Activated T-helper 2 cell treated with anti-CD3 and anti-CD28 coated beads, Interferon-gamma antibody, Interleukin-2, Interleukin-4, amounts not matched to agents 10 μg/mL and 5 μg/mL and 100 μg/mL, durations not matched to agents 14 hours and 24 hours and 36 hours (primary cell): ENCODE measurements at regions of chr4 and their contacts with region 1.

Region 1: DNA sequence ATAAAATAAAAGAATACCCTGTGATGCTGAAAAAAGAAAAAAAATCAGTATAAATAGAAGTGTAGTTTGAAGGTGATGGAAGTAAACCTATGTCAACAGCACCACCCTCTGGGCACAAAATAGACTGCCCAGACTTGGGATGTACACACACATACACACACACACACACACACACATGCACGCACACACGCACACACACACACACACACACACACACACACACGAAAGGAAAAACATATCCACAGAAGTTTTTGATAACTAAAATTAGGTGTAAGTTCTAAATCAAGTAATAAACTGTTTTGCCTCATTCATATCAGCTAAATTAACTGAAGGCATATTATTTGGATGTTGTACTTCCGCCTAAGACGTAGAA is 40.5 kb downstream of the ANXA5 start:
- DNase-seq: no peak
- H3K4me3 Mint-ChIP-seq: no peak overlapping the region
- H3K27ac Mint-ChIP-seq: no peak overlapping the region
- H3K4me1 Mint-ChIP-seq: peaks cover 7% of the 10 kb centered on the region
- H3K27me3 Mint-ChIP-seq: peaks cover 28% of the 10 kb centered on the region

Region 2: DNA sequence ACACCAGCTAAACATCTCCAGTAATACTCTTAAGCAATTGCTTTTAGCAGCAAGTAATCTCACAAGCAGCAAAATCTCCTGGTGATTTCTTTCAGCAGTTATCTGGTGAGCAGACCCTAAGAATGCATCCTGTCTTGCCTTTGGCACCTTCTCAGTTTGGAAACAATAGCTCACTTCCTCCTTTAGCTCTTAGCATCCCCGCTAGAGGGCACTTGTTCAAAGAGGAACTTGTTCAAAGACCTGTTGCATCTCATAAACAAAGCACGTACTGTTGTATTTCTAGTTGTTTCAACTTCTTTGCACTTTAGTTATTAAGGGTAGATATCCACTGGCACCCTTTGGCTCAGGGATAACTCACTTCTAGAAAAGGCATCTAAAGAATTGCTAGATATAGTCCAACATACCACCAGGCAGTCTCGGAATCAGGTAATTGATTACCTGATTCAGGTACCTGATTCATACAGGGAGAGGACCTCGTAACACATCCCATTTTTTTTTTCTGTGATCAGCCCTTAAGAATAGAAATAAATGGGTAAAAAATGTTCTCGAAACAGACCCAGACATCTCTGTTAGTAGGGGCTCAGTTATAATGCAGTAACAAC is 193.5 kb before region 1 on chr4:
- intact Hi-C with region 1: loop called (anchors 5 kb)
- DNase-seq: no peak
- H3K4me3 Mint-ChIP-seq: no peak overlapping the region
- H3K27ac Mint-ChIP-seq: no peak overlapping the region
- H3K4me1 Mint-ChIP-seq: peaks cover 4% of the 10 kb centered on the region
- H3K27me3 Mint-ChIP-seq: peaks cover 24% of the 10 kb centered on the region

Region 3: GRCh38 chr4:121484633-121485032 is 171.6 kb before region 1 on chr4:
- intact Hi-C with region 1: loop called (anchors 1 kb)
- DNase-seq: no peak
- H3K4me3 Mint-ChIP-seq: no peak overlapping the region
- H3K27ac Mint-ChIP-seq: no peak overlapping the region
- H3K4me1 Mint-ChIP-seq: no peaks in the 10 kb centered on the region
- H3K27me3 Mint-ChIP-seq: peaks cover 30% of the 10 kb centered on the region

Region 4: DNA sequence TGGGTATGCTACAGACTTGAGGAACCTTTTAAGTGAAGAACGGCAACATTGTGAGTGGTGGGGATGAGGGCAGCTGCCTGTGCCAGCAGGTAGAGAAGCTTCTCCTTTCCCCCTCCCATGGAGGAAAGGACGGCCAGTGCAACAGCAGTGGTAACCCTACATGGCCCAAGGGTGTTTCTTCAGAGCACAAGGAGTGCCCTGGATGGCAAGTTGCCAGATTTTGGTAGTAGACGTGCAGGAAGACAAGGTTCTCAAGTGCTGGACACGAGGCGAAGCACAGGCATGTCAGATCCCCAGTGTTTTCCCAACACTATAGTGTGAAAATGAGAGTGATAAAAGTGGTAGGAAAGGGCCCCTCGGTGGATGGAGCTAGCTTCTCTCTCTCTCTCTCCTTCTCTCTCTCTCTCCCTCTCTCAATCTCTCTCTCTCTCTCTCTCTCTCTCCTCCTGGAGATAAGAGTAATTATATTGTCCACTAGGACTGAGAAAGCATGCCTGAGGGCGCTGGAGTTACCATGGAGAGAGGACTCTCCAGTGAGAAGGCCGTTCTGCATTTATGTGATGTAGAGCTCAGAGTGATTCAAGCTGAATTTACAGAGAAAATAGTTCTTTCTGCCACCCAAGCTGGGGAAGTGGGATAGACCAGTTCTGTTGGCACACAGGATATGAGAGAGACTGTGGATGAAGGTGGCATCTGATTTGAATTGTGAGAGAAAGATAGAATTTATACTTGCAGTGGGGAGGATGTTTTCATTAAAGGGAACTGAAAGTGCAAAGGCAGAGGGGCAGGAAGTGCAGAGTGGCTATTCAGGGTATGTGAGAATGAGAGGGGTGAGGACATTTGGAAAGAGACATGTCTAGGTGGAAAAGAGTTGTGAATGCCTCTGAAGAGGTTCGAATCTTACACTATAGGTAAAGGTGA is 321.3 kb after region 1 on chr4:
- intact Hi-C with region 1: no loop called
- DNase-seq: no peak
- H3K4me3 Mint-ChIP-seq: no peak overlapping the region
- H3K27ac Mint-ChIP-seq: no peak overlapping the region
- H3K4me1 Mint-ChIP-seq: peaks cover 5% of the 10 kb centered on the region
- H3K27me3 Mint-ChIP-seq: peaks cover 29% of the 10 kb centered on the region